A549 (cell line): ENCODE measurements at regions of chr10 and their contacts with region 1.

Region 1: DNA sequence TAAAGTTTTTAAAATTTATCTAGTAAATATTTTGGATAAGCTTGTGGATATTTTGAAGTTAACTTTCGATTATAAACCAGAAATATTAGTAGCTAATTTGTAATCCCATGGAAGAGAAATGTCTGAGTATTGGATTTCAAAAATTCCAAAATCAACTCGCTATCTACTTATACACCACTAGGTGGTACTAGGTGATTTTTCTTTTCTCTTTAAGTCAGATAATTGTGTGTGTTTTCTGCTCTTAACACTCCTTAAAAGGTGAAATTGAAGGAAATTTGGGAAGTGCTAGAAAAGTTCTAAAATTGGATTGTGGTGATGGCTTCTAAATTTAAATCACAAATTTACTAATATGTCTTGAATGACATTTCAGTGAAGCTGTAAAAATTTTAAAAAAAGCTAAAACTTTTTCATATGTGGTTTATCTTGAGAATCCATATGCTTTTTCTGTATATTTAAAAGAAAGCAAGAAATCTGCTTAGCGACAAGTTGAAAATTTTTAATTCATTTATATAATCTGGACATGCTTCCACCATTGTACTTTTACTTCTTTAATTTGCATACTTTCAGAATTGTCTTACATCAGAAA is 90.2 kb downstream of the IPMK start:
- DNase-seq: peak; percentile 16 to 39
- ATAC-seq: peak in 1 of 2 experiments; percentile 52; a peak in 1 of 6 replicates
- H3K4me3 ChIP-seq: no peak overlapping the region
- H3K27ac ChIP-seq: no peak overlapping the region
- H3K4me1 ChIP-seq: peaks cover 27% of the 10 kb centered on the region; the same call in 2 of the 3 replicates
- CTCF ChIP-seq: peak; percentile 84
- EP300 ChIP-seq: no peak
- POLR2A ChIP-seq: no peak
- RAD21 ChIP-seq: peak; percentile 87 to 89

Region 2: DNA sequence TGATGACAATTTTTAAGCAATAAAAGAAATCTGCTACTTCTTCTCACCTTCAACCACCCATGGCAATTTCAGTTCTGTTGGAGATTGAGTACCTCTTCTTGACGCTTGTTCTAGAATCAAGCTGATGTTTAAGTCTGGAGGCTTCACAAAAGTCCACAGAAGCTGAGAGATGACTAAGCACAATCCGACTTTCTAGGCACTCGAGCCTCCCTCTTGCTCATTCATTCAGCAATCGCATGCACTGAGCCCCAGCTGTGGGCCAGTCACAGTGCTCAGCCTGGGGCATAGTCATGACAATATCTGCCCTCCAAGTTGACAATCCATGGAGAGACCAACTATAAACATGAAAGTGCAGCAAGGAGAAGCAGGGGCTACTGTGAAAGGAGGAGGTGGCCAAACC is 12.9 kb before region 1 on chr10:
- CTCF ChIA-PET with region 1: interaction called, 18 read pairs
- POLR2A ChIA-PET with region 1: no interaction called
- DNase-seq: no peak
- ATAC-seq: no peak
- H3K4me3 ChIP-seq: no peak overlapping the region
- H3K27ac ChIP-seq: no peak overlapping the region
- H3K4me1 ChIP-seq: no peaks in the 10 kb centered on the region
- CTCF ChIP-seq: no peak
- EP300 ChIP-seq: no peak
- POLR2A ChIP-seq: no peak
- RAD21 ChIP-seq: no peak

Region 3: GRCh38 chr10:58220769-58221451 is 43.5 kb after region 1 on chr10:
- CTCF ChIA-PET with region 1: no interaction called
- POLR2A ChIA-PET with region 1: no interaction called
- DNase-seq: no peak
- ATAC-seq: no peak
- H3K4me3 ChIP-seq: no peak overlapping the region
- H3K27ac ChIP-seq: no peak overlapping the region
- H3K4me1 ChIP-seq: peaks cover 27% of the 10 kb centered on the region
- CTCF ChIP-seq: no peak
- EP300 ChIP-seq: no peak
- POLR2A ChIP-seq: no peak
- RAD21 ChIP-seq: no peak

Region 4: GRCh38 chr10:58268870-58269605 is 91.6 kb after region 1 on chr10 and contains the start of gene CISD1:
- CTCF ChIA-PET with region 1: interaction called, 19 read pairs
- POLR2A ChIA-PET with region 1: interaction called, 6 read pairs
- DNase-seq: peak; percentile 98 to 100
- ATAC-seq: peak; percentile 65 to 86
- H3K4me3 ChIP-seq: peak within 1 kb of the TSS; percentile 61
- H3K27ac ChIP-seq: peak within 1 kb of the TSS; percentile 83 to 94
- H3K4me1 ChIP-seq: peaks cover 31% of the 10 kb centered on the region; the same call in 2 of the 3 replicates
- CTCF ChIP-seq: no peak
- EP300 ChIP-seq: no peak
- POLR2A ChIP-seq: peak; percentile 81
- RAD21 ChIP-seq: no peak
- polyA plus RNA-seq, gene CISD1: 102 and 111 TPM in 2 replicates

Region 5: GRCh38 chr10:58299580-58299979 is 122.1 kb after region 1 on chr10:
- CTCF ChIA-PET with region 1: interaction called, 221 read pairs
- POLR2A ChIA-PET with region 1: no interaction called
- DNase-seq: peak; percentile 62 to 68
- ATAC-seq: peak; percentile 94 to 97
- H3K4me3 ChIP-seq: no peak overlapping the region
- H3K27ac ChIP-seq: no peak overlapping the region
- H3K4me1 ChIP-seq: no peaks in the 10 kb centered on the region
- CTCF ChIP-seq: peak; percentile 88
- EP300 ChIP-seq: no peak
- POLR2A ChIP-seq: no peak
- RAD21 ChIP-seq: peak; percentile 89 to 90